ENCODE measurements at regions of chr3 and their contacts with region 1.

Region 1: DNA sequence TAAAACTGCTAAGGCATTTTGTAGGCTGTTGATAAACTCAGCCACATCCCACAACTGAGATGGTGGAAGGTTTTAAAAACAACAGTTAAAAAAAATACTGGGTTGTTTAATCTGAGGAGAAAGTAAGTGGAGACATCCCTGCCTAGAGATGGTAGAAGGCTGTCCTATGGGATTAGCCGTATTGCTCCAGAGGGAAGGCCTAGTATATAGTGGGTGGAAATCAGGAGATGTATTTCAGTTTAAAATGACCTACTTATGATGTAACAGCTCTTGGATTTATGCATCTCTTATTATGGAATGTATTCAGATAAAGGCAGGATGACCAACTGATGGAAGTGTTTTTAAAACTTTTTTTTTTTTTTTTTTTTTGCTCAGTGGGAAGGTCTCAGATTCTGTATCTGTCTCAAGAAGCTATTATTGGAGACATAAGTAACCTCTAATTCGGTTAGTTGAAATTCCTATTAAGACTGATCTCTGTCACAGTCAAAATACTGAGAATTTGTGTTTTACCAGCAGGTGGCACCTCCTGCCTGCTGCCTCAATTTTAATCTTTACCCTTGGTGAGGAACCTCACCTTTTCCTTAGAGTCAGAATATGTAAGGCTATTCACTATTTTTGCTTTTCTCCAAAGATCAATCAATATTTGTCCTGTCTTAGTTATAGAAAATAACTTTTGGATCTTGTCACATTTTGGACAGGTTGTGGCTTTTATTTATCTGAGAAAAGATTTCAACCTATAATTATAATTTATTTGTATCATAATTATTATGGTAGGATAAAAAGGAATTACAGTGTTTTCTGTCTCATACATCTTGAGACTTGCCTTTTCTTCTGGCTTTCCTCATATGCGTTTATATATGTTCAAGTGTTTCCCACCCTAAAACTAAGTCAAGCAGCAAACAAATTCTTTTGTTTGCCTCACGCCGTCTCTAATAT is 63.0 kb downstream of the VPS8 start:
- DNase-seq: peak in 4 of 14 experiments; percentile 1 to 18 (median 18)
- ATAC-seq: no peak
- H3K4me3 ChIP-seq: no peak overlapping the region
- H3K4me3 Mint-ChIP-seq: no peak overlapping the region
- H3K27ac ChIP-seq: no peak overlapping the region
- H3K27ac Mint-ChIP-seq: no peak overlapping the region
- H3K4me1 ChIP-seq: no peaks in the 10 kb centered on the region
- H3K4me1 Mint-ChIP-seq: no peaks in the 10 kb centered on the region
- H3K27me3 ChIP-seq: no peaks in the 10 kb centered on the region
- H3K27me3 Mint-ChIP-seq: no peaks in the 10 kb centered on the region
- CTCF ChIP-seq: peak; percentile 34

Region 2: DNA sequence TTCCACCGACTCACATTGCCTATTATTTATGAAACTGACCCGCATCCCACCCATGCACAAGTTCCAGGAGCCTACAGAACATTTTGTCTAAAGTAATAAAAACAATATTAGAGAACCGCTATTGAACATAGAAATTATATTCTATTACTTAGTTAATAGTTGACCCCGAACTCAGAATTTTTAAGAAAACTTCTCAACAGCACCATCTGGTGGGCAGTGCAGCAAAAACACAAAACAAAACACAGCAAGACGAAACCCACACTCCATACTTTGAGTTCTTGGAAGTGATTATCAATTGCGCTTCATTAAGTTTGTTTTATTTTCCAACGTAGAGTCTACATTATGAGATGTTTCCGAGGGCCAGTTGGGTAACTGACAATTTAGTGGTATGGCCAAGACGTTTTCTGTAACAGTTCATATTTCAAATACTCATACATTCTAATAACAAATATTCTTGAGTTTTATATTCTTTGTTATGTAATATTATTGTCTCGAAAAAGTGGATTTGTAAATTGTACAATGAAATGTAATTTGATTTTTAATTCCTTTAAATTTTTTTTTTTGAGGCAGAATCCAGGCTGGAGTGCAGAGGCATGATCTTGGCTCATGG is 301.9 kb after region 1 on chr3:
- CTCF ChIA-PET with region 1: no interaction called
- POLR2A ChIA-PET with region 1: no interaction called
- intact Hi-C with region 1: loop called (anchors 2 to 5 kb)
- DNase-seq: peak in 5 of 14 experiments; percentile 3 to 39 (median 14)
- ATAC-seq: no peak
- H3K4me3 ChIP-seq: no peak overlapping the region
- H3K4me3 Mint-ChIP-seq: no peak overlapping the region
- H3K27ac ChIP-seq: no peak overlapping the region
- H3K27ac Mint-ChIP-seq: no peak overlapping the region
- H3K4me1 ChIP-seq: no peaks in the 10 kb centered on the region
- H3K4me1 Mint-ChIP-seq: no peaks in the 10 kb centered on the region
- H3K27me3 ChIP-seq: peaks cover 4 to 7% of the 10 kb centered on the region in 2 experiments
- H3K27me3 Mint-ChIP-seq: peaks cover 5% of the 10 kb centered on the region
- CTCF ChIP-seq: peak; percentile 68

Region 3: GRCh38 chr3:185308126-185308754 is 433.3 kb after region 1 on chr3:
- CTCF ChIA-PET with region 1: no interaction called
- POLR2A ChIA-PET with region 1: no interaction called
- intact Hi-C with region 1: loop called in 1 of 2 experiments (anchors 10 kb)
- DNase-seq: peak in 12 of 14 experiments; percentile 3 to 64 (median 22)
- ATAC-seq: no peak
- H3K4me3 ChIP-seq: no peak overlapping the region
- H3K4me3 Mint-ChIP-seq: no peak overlapping the region
- H3K27ac ChIP-seq: no peak overlapping the region
- H3K27ac Mint-ChIP-seq: no peak overlapping the region
- H3K4me1 ChIP-seq: no peaks in the 10 kb centered on the region
- H3K4me1 Mint-ChIP-seq: no peaks in the 10 kb centered on the region
- H3K27me3 ChIP-seq: no peaks in the 10 kb centered on the region
- H3K27me3 Mint-ChIP-seq: peaks cover 9% of the 10 kb centered on the region
- CTCF ChIP-seq: peak; percentile 60